Panc1 (cell line): ENCODE measurements at regions of chr1 and their contacts with region 1.

Region 1: GRCh38 chr1:50633465-50633864 is 210.2 kb upstream of the DMRTA2 start:
- DNase-seq: no peak
- ATAC-seq: no peak
- H3K4me3 ChIP-seq: no peak overlapping the region
- H3K27ac ChIP-seq: no peak overlapping the region
- H3K4me1 ChIP-seq: no peaks in the 10 kb centered on the region
- H3K27me3 ChIP-seq: no peaks in the 10 kb centered on the region
- CTCF ChIP-seq: no peak

Region 2: DNA sequence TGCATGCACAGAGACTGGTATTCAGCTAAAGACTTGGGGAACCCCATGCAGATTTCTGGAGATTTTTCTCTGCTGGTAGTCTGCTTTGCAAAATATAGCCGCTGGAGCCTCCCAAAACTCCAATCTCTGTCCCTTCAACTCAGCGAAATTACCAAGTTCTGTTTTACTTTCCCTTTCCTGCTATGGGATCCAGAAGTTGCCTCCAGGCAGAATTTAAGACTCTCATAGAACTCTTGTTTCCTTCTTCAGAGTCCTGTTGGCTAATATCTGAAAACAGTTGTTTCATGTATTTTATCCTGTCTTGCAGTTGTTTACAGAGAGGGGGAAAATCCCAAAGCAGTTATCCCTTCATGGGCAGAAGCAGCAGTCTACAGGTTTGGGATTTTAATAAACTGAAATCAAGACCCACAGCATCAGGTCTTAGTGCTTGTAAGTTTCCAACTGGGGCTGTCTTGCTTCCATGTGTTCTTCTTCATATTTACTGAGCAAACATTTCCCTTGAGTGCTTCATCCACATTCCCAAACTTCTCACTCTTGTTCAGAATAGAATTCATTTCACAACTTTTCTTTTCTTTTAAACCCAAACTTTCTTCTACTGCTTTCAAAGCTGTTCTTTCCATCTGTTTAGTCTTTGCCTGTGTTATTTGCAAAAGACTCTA is 11.1 kb after region 1 on chr1:
- CTCF ChIA-PET with region 1: no interaction called
- POLR2A ChIA-PET with region 1: interaction called, 10 read pairs
- in situ Hi-C with region 1: no loop called
- intact Hi-C with region 1: no loop called
- DNase-seq: no peak
- ATAC-seq: no peak
- H3K4me3 ChIP-seq: no peak overlapping the region
- H3K27ac ChIP-seq: no peak overlapping the region
- H3K4me1 ChIP-seq: no peaks in the 10 kb centered on the region
- H3K27me3 ChIP-seq: no peaks in the 10 kb centered on the region
- CTCF ChIP-seq: no peak

Region 3: GRCh38 chr1:52436817-52437216 is 1803.4 kb after region 1 on chr1:
- CTCF ChIA-PET with region 1: no interaction called
- POLR2A ChIA-PET with region 1: no interaction called
- in situ Hi-C with region 1: no loop called
- intact Hi-C with region 1: no loop called
- DNase-seq: no peak
- ATAC-seq: no peak
- H3K4me3 ChIP-seq: no peak overlapping the region
- H3K27ac ChIP-seq: no peak overlapping the region
- H3K4me1 ChIP-seq: no peaks in the 10 kb centered on the region
- H3K27me3 ChIP-seq: no peaks in the 10 kb centered on the region
- CTCF ChIP-seq: no peak